Endothelial cell of umbilical vein (primary cell): ENCODE measurements at regions of chr14 and their contacts with region 1.

Region 1: GRCh38 chr14:68734231-68734775 is 58.6 kb downstream of the ZFP36L1 start:
- DNase-seq: peak; percentile 34
- H3K4me3 ChIP-seq: no peak overlapping the region
- H3K27ac ChIP-seq: no peak overlapping the region
- H3K4me1 ChIP-seq: peaks cover 10% of the 10 kb centered on the region
- H3K27me3 ChIP-seq: no peaks in the 10 kb centered on the region
- CTCF ChIP-seq: no peak
- POLR2A ChIP-seq: no peak

Region 2: GRCh38 chr14:68762953-68763764 is 28.9 kb after region 1 on chr14:
- CTCF ChIA-PET with region 1: interaction called, 8 read pairs
- POLR2A ChIA-PET with region 1: no interaction called
- dilution Hi-C with region 1: no loop called
- intact Hi-C with region 1: loop called (anchors 2 kb)
- DNase-seq: peak; percentile 92
- H3K4me3 ChIP-seq: no peak overlapping the region
- H3K27ac ChIP-seq: no peak overlapping the region
- H3K4me1 ChIP-seq: peaks cover 28% of the 10 kb centered on the region
- H3K27me3 ChIP-seq: no peaks in the 10 kb centered on the region
- CTCF ChIP-seq: no peak
- POLR2A ChIP-seq: peak; percentile 35